ENCODE measurements at regions of chr4 and their contacts with region 1.

Region 1: GRCh38 chr4:97309121-97309520 is 834.2 kb downstream of the STPG2 start:
- DNase-seq: no peak
- H3K4me3 ChIP-seq: no peak overlapping the region
- CTCF ChIP-seq: no peak

Region 2: GRCh38 chr4:97370568-97370967 is 61.4 kb after region 1 on chr4:
- in situ Hi-C with region 1: loop called (anchors 5 kb)
- DNase-seq: no peak
- H3K4me3 ChIP-seq: no peak overlapping the region
- CTCF ChIP-seq: no peak

Measured in astrocyte of the cerebellum (primary cell).